Naive thymus-derived CD8-positive, alpha-beta T cell (primary cell): ENCODE measurements at regions of chr6 and their contacts with region 1.

Region 1: DNA sequence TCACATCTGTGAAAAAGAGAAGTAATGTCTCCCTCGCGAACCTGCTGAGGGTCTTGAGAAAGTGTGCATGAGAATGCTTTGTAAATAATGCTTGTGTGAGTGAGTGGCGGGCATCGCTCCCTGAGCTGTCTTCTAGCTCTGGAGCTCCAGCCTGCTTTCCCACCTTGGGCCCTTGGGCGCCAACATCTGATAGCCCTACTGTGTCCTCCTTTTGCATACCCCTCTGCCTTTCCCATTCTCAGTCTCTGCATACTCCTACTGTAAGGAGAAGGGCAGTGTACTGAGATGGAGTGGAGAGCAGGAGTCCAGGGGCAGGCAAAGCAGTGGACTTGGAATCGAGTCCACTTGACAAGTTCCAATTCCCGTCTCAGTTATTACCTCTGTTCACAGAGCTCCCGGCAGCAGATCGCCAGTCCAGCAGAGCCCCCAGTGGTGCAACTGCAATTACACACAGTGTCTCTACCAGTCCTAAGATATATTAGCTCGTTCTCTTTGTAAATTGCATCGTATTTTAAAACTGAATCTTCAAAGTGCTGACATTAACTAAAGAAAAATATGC is 847 bp upstream of the NCR2 start:
- DNase-seq: peak in 2 of 10 donors; percentile 14 to 22
- ATAC-seq: peak in 1 of 2 donors; percentile 7
- H3K4me3 Mint-ChIP-seq: peak overlapping the region; percentile 57 to 88 (median 72)
- H3K27ac Mint-ChIP-seq: peak overlapping the region; percentile 89 to 99 (median 94)
- H3K4me1 Mint-ChIP-seq: peaks cover 43 to 62% (median 60%) of the 10 kb centered on the region in 4 donors
- H3K27me3 Mint-ChIP-seq: peaks cover 0 to 2% (median 0%) of the 10 kb centered on the region in 5 donors

Region 2: DNA sequence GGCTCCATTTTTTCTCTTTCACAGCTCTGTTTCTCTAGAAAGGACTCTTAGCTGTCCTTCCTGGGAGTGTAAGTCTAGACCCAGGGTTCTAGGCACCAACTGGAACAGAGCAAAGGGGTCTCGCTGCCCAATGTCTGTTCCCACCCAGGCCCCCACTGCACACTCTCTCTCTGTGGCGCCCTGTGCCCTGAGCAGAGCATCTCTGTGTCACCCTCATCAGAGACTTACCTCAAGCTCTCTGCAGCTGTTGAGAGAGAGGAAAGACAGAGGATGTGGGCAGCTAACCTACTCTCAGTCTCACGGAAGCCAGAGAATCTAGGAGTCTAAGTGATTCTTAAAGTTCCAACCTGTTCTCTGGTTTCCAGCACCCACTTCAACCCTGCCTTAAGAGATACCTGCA is 10.3 kb after region 1 on chr6:
- POLR2A ChIA-PET with region 1: interaction called, 28 read pairs
- DNase-seq: peak in 7 of 10 donors; percentile 23 to 71 (median 59)
- ATAC-seq: peak; percentile 100
- H3K4me3 Mint-ChIP-seq: peak overlapping the region in 9 of 10 donors; percentile 11 to 77 (median 65)
- H3K27ac Mint-ChIP-seq: peak overlapping the region; percentile 82 to 95 (median 90)
- H3K4me1 Mint-ChIP-seq: peaks cover 24 to 39% (median 29%) of the 10 kb centered on the region in 4 donors
- H3K27me3 Mint-ChIP-seq: peaks cover 0 to 5% (median 0%) of the 10 kb centered on the region in 5 donors